ENCODE measurements at regions of chr4 and their contacts with region 1.

Region 1: DNA sequence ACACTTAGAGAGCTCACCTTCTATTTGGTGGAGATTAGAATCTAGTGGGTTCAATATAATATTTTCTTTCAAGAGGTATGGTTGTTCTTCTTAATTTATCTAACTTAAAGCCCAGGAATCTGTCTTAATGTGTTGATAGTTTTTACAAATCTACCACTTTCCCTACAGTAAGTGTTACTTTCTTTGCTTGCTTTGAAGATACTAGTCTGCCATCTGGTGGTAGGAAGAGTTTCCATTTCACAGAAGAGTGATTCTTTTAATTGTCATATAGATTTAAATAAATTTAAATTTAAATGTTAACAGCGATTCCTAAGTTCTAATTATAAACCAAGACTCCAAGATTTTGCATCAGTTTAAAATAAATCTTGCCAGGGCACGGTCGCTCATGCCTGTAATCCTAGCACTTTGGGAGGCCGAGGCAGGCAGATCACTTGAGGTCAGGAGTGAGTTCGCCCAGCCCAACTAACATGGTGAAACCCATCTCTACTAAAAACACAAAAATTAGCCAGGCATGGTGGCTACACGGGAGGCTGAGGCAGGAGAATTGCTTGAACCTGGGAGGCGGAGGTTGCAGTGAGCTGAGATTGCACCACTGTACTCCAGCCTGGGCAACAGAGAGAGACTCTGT is 43.5 kb downstream of the NUDT9 start:
- DNase-seq: peak; percentile 32 to 44 (median 43)
- H3K4me3 ChIP-seq: no peak overlapping the region
- H3K4me3 Mint-ChIP-seq: no peak overlapping the region
- H3K27ac ChIP-seq: no peak overlapping the region
- H3K27ac Mint-ChIP-seq: no peak overlapping the region
- H3K4me1 ChIP-seq: no peaks in the 10 kb centered on the region
- H3K4me1 Mint-ChIP-seq: peaks cover 0 to 2% (median 0%) of the 10 kb centered on the region in 4 donors
- H3K27me3 ChIP-seq: no peaks in the 10 kb centered on the region
- H3K27me3 Mint-ChIP-seq: no peaks in the 10 kb centered on the region

Region 2: GRCh38 chr4:86927843-86928395 is 537.9 kb before region 1 on chr4:
- CTCF ChIA-PET with region 1: no interaction called
- POLR2A ChIA-PET with region 1: no interaction called
- intact Hi-C with region 1: loop called (anchors 5 kb)
- DNase-seq: no peak
- H3K4me3 ChIP-seq: no peak overlapping the region
- H3K4me3 Mint-ChIP-seq: no peak overlapping the region
- H3K27ac ChIP-seq: no peak overlapping the region
- H3K27ac Mint-ChIP-seq: peak overlapping the region in 2 of 7 donors; percentile 10 to 19
- H3K4me1 ChIP-seq: no peaks in the 10 kb centered on the region
- H3K4me1 Mint-ChIP-seq: peaks cover 0 to 2% (median under 1%) of the 10 kb centered on the region in 4 donors
- H3K27me3 ChIP-seq: no peaks in the 10 kb centered on the region
- H3K27me3 Mint-ChIP-seq: no peaks in the 10 kb centered on the region

Region 3: DNA sequence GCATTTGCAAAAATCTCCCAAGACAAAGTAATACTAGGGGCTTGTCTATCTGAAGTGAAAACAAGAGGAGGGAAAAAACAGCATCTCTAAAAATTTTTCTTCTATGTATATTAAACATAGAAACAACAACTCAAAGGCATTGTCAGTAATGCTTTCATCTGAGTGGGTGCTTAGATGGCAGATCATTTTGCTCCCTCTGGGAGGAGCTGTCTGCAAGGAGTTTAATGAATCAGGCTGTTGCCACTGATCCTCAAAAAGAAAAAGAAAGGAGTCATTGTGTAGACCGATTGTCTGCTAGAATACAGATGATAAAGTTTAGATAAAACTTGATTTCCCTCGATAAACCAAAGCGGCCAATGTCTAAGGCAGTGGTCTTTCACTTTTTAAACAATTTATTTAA is 195.7 kb before region 1 on chr4:
- CTCF ChIA-PET with region 1: interaction called, 3 read pairs
- POLR2A ChIA-PET with region 1: no interaction called
- intact Hi-C with region 1: loop called (anchors 1 kb)
- DNase-seq: no peak
- H3K4me3 ChIP-seq: no peak overlapping the region
- H3K4me3 Mint-ChIP-seq: no peak overlapping the region
- H3K27ac ChIP-seq: no peak overlapping the region
- H3K27ac Mint-ChIP-seq: no peak overlapping the region
- H3K4me1 ChIP-seq: no peaks in the 10 kb centered on the region
- H3K4me1 Mint-ChIP-seq: no peaks in the 10 kb centered on the region
- H3K27me3 ChIP-seq: no peaks in the 10 kb centered on the region
- H3K27me3 Mint-ChIP-seq: peaks cover 6 to 11% of the 10 kb centered on the region in 2 donors

Region 4: DNA sequence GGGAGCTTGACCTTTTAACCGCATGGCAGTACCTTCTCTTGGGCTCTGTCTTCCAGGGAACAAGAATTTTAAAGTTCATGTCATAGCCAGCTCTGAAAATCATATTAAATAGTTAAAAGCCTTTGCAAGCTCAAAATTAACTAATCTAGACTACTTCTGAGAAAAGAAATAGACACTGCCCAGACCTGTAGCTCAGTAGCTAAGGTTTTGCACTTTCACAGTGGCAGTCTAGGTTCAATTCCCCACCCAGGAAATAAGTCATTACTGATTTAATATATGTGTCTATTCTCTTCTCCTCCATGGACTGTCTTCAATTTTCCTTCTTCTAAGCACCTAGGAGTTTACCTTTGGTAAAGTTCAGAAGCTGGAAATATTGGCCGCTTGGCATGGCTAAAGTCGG is 102.3 kb before region 1 on chr4:
- CTCF ChIA-PET with region 1: interaction called, 11 read pairs
- POLR2A ChIA-PET with region 1: no interaction called
- intact Hi-C with region 1: no loop called
- DNase-seq: no peak
- H3K4me3 ChIP-seq: no peak overlapping the region
- H3K4me3 Mint-ChIP-seq: no peak overlapping the region
- H3K27ac ChIP-seq: no peak overlapping the region
- H3K27ac Mint-ChIP-seq: no peak overlapping the region
- H3K4me1 ChIP-seq: no peaks in the 10 kb centered on the region
- H3K4me1 Mint-ChIP-seq: no peaks in the 10 kb centered on the region
- H3K27me3 ChIP-seq: no peaks in the 10 kb centered on the region
- H3K27me3 Mint-ChIP-seq: no peaks in the 10 kb centered on the region

Region 5: DNA sequence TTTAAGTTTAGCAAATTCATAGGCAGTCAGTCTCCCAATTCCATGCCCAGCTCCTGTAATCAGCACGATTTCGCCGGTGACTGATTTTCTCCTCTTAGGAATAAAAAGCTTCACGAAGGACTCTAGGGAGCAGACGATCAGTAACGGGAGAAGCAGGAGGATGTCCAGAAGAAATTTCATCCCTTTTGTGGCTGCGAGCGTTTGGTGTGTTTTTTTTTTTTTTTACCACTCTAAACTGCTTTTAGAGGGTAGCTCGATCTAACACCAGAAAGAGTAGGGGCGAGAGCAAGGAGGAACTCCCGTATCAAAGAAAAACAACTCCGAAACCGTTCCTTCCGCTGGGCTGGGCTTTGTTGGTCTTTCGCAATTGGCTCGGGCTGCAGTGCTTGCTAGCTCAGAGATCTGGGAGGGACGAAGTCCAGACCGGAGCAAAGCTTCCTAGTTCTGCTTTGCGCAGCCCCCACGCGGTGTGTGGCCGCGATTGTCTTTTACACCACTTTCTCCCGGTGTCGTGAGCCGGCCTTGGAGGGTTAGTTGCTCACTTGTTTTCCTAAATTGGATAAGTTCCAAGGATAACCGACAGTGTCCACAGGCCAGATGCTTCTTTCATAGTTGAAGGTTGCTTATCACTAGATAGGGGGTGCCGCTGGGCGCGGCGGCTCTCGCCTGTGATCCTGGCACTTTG is 74.8 kb before region 1 on chr4 and contains the start of gene HSD17B11:
- CTCF ChIA-PET with region 1: interaction called, 21 read pairs
- POLR2A ChIA-PET with region 1: no interaction called
- intact Hi-C with region 1: loop called (anchors 5 kb)
- DNase-seq: peak; percentile 80 to 88 (median 83)
- H3K4me3 ChIP-seq: peak within 1 kb of the TSS; percentile 87 to 90
- H3K4me3 Mint-ChIP-seq: peak within 1 kb of the TSS; percentile 89 to 99 (median 96)
- H3K27ac ChIP-seq: peak within 1 kb of the TSS; percentile 74
- H3K27ac Mint-ChIP-seq: peak within 1 kb of the TSS; percentile 82 to 98 (median 94)
- H3K4me1 ChIP-seq: peaks cover 41% of the 10 kb centered on the region
- H3K4me1 Mint-ChIP-seq: peaks cover 31 to 50% (median 42%) of the 10 kb centered on the region in 4 donors
- H3K27me3 ChIP-seq: no peaks in the 10 kb centered on the region
- H3K27me3 Mint-ChIP-seq: no peaks in the 10 kb centered on the region
- total RNA-seq, gene HSD17B11: 69.7 to 69.8 TPM

Region 6: DNA sequence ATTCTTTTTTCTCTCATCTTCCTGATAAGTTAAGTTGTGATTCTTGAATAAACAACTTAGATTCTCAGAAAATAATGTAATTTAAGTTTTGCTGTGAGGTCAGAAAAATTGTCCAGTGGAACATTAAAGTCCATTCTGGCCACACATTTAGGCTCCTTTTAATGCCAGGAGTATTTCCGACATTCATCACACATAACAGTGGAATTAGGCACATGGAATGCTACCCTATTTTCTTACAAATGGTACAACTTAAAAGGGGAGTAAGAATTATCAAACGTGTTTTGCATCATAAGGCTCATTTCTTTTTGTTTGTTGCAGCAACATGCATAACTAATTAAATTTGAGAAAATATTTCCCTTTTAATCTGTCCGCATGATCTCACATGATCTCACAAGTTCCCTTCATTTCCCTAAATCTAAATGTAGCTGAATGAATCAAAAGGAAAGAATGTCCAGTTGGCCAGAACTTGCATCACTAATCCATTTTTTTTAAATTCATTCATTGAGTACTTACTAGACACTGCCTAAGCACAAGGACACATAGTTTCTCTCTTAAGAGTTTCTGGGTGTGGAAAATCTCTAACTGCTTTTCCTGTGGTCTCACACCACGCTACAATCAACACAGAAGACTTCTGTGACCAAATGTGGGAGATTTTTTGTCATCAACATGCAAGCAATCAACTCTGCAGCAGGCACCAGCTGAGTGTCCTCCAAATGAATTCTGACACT is 41.3 kb after region 1 on chr4:
- CTCF ChIA-PET with region 1: no interaction called
- POLR2A ChIA-PET with region 1: no interaction called
- intact Hi-C with region 1: no loop called
- DNase-seq: no peak
- H3K4me3 ChIP-seq: no peak overlapping the region
- H3K4me3 Mint-ChIP-seq: no peak overlapping the region
- H3K27ac ChIP-seq: no peak overlapping the region
- H3K27ac Mint-ChIP-seq: no peak overlapping the region
- H3K4me1 ChIP-seq: no peaks in the 10 kb centered on the region
- H3K4me1 Mint-ChIP-seq: no peaks in the 10 kb centered on the region
- H3K27me3 ChIP-seq: no peaks in the 10 kb centered on the region
- H3K27me3 Mint-ChIP-seq: peaks cover 3 to 4% of the 10 kb centered on the region in 2 donors

Region 7: GRCh38 chr4:87738483-87738882 is 272.6 kb after region 1 on chr4:
- CTCF ChIA-PET with region 1: no interaction called
- POLR2A ChIA-PET with region 1: no interaction called
- intact Hi-C with region 1: no loop called
- DNase-seq: no peak
- H3K4me3 ChIP-seq: no peak overlapping the region
- H3K4me3 Mint-ChIP-seq: no peak overlapping the region
- H3K27ac ChIP-seq: no peak overlapping the region
- H3K27ac Mint-ChIP-seq: no peak overlapping the region
- H3K4me1 ChIP-seq: no peaks in the 10 kb centered on the region
- H3K4me1 Mint-ChIP-seq: no peaks in the 10 kb centered on the region
- H3K27me3 ChIP-seq: no peaks in the 10 kb centered on the region
- H3K27me3 Mint-ChIP-seq: peaks cover 6 to 8% of the 10 kb centered on the region in 2 donors

Measured in CD4-positive, alpha-beta memory T cell (primary cell).